ENCODE measurements at regions of chr2 and their contacts with region 1.

Region 1: GRCh38 chr2:81077396-81077795 is 772.8 kb upstream of the LRRTM1 start:
- DNase-seq: no peak
- ATAC-seq: no peak
- H3K4me3 ChIP-seq: no peak overlapping the region
- H3K27ac ChIP-seq: no peak overlapping the region
- H3K4me1 ChIP-seq: no peaks in the 10 kb centered on the region
- H3K27me3 ChIP-seq: no peaks in the 10 kb centered on the region
- CTCF ChIP-seq: no peak

Region 2: DNA sequence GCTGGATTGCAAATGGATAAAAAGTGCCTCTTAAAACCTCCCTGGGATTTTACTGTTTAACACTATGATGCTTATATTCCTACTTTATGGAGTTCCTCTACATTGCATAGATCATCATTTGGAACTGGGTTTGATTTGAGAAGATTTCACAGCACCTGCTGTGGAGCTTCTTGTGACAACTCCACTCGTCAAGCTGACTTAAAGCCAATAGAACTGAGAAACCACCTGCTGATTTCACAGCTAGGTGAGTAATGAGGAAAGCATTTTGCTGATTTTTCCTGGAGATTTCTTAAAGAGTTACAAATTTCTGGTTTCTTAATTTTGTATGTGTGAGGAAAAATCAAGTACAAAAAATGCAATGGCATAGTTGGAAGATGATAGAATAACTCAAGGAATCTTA is 33.7 kb before region 1 on chr2:
- intact Hi-C with region 1: no loop called
- DNase-seq: no peak
- ATAC-seq: no peak
- H3K4me3 ChIP-seq: no peak overlapping the region
- H3K27ac ChIP-seq: no peak overlapping the region
- H3K4me1 ChIP-seq: no peaks in the 10 kb centered on the region
- H3K27me3 ChIP-seq: no peaks in the 10 kb centered on the region
- CTCF ChIP-seq: no peak

Region 3: DNA sequence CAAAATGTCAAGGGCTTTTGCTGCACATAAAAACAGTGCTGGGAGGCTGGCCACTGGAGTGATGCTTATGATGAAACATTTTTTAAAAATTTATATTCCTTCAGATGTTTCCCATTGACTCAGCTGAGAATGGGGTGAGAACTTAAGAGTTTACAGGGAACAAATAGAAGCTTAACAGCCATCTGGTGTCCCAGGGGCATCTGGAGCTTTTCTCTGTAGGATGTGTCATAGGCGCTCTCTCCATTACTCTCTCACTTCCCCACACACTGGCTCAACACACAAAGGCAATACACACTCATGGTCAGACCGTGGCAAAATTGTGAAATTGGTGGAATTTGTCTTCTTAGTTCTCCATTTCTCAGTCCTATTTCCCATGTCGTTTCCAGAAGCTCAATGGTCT is 10.2 kb after region 1 on chr2:
- intact Hi-C with region 1: loop called in 1 of 2 experiments (anchors 1 kb)
- DNase-seq: no peak
- ATAC-seq: no peak
- H3K4me3 ChIP-seq: no peak overlapping the region
- H3K27ac ChIP-seq: no peak overlapping the region
- H3K4me1 ChIP-seq: no peaks in the 10 kb centered on the region
- H3K27me3 ChIP-seq: no peaks in the 10 kb centered on the region
- CTCF ChIP-seq: no peak

Region 4: DNA sequence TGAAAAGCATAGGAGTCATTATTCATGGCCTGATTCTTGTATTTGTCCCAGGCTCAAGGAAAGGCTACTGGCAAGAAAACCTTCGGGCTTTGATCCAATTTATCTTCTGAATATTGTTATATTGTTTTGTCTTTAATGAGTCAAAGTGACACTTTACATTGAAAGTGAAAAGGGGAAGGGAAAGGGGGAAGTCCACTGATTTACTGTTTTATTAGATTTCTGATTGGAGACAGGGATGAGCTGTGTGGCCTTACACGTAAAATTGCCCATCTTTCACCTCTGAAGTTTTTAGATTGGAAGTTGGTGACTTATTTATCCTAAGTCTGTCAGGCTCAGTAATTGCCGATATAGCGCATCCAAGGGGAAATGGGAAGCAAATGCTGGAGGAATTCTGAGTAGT is 70.9 kb after region 1 on chr2:
- intact Hi-C with region 1: no loop called
- DNase-seq: no peak
- ATAC-seq: no peak
- H3K4me3 ChIP-seq: no peak overlapping the region
- H3K27ac ChIP-seq: no peak overlapping the region
- H3K4me1 ChIP-seq: no peaks in the 10 kb centered on the region
- H3K27me3 ChIP-seq: no peaks in the 10 kb centered on the region
- CTCF ChIP-seq: no peak

Region 5: GRCh38 chr2:81206216-81206615 is 128.8 kb after region 1 on chr2:
- intact Hi-C with region 1: no loop called
- DNase-seq: no peak
- ATAC-seq: no peak
- H3K4me3 ChIP-seq: no peak overlapping the region
- H3K27ac ChIP-seq: no peak overlapping the region
- H3K4me1 ChIP-seq: no peaks in the 10 kb centered on the region
- H3K27me3 ChIP-seq: no peaks in the 10 kb centered on the region
- CTCF ChIP-seq: no peak